Activated CD8-positive, alpha-beta T cell treated with anti-CD3 and anti-CD28 coated beads, Interleukin-2, amount 10 ng/mL, durations not matched to agents 7 days and 5 days (primary cell): ENCODE measurements at regions of chr12 and their contacts with region 1.

Region 1: GRCh38 chr12:49232940-49233841 is 31.7 kb upstream of the TUBA1C start:
- DNase-seq: no peak
- ATAC-seq: no peak
- H3K4me3 Mint-ChIP-seq: no peak overlapping the region
- H3K27ac Mint-ChIP-seq: peak overlapping the region; percentile 29
- H3K4me1 Mint-ChIP-seq: peaks cover 21% of the 10 kb centered on the region
- H3K27me3 Mint-ChIP-seq: peaks cover 10% of the 10 kb centered on the region

Region 2: GRCh38 chr12:49244176-49244575 is 11.0 kb after region 1 on chr12:
- CTCF ChIA-PET with region 1: interaction called, 26 read pairs
- POLR2A ChIA-PET with region 1: interaction called, 3 read pairs
- DNase-seq: no peak
- ATAC-seq: no peak
- H3K4me3 Mint-ChIP-seq: no peak overlapping the region
- H3K27ac Mint-ChIP-seq: no peak overlapping the region
- H3K4me1 Mint-ChIP-seq: no peaks in the 10 kb centered on the region
- H3K27me3 Mint-ChIP-seq: peaks cover 6% of the 10 kb centered on the region

Region 3: DNA sequence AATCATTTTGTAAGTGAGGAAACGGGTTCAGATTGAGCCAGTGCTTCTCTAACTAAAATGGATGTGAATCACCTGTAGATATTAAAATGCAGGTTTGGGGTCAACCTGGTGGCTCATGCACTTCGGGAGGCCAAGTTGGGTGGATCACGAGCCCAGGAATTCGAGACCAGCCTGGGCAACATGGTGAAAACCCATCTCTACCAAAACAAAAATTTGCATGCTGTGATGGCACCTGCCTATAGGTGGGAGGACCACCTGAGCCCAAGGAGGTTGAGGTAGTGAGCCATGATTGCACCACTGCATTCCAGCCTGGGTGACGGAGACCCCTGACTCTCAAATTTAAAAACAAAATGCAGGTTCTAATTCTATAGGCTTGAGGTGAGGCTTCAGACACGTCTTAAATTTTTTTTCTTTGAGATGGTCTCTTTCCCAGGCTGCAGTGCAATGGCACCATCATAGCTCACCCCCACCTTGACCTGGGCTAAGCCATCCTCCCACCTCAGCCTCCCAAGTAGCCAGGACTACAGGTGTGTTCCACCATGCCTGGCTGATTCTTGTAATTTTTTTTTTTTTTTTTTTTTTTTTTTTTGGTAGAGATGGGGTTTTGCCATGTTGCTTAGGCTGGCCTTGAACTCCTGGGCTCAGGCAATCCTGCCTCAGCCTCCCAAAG is 40.7 kb after region 1 on chr12:
- CTCF ChIA-PET with region 1: no interaction called
- POLR2A ChIA-PET with region 1: no interaction called
- DNase-seq: no peak
- ATAC-seq: no peak
- H3K4me3 Mint-ChIP-seq: no peak overlapping the region
- H3K27ac Mint-ChIP-seq: no peak overlapping the region
- H3K4me1 Mint-ChIP-seq: peaks cover 11% of the 10 kb centered on the region
- H3K27me3 Mint-ChIP-seq: no peaks in the 10 kb centered on the region

Region 4: DNA sequence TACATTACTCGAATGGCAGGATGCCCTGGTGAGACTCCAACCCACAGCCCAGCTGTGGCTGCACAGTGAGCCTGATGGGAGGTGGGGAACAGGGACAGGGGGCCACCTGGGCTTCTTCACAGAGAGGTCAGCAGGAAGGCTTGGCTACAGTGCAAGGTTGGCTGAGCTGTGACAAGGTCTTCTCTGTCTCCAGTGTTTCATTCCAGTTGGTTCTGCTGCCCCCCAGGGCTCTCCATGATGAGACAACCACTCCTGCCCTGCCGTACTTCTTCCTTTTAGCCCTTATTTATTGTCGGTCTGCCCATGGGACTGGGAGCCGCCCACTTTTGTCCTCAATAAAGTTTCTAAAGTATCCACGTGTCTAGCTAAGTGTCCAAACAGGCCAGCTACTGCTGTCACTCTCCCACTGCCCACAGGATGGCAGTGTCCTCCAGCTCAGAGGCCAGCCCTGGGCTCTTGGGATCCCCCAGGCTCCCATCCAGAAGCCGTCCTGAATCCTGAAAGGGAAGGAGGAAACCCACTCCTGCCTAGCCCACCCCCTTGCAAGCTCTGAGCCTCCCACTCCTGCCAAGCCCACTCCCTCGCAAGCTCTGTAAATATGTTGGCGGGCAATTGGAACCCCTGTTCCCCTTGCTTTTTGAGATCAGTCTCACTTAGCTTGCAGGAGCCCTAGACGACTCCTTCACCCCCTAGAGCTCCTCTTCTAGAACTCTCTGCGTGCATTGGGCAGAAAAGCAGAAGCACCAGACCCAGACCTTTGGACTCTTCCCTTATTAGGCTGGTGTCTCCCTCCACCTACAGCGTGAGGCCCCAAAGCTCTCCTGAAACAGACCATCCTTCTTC is 98.4 kb after region 1 on chr12:
- CTCF ChIA-PET with region 1: no interaction called
- POLR2A ChIA-PET with region 1: no interaction called
- DNase-seq: no peak
- ATAC-seq: no peak
- H3K4me3 Mint-ChIP-seq: no peak overlapping the region
- H3K27ac Mint-ChIP-seq: no peak overlapping the region
- H3K4me1 Mint-ChIP-seq: peaks cover 4% of the 10 kb centered on the region
- H3K27me3 Mint-ChIP-seq: peaks cover 27% of the 10 kb centered on the region